ENCODE measurements at regions of chr16 and their contacts with region 1.

Region 1: DNA sequence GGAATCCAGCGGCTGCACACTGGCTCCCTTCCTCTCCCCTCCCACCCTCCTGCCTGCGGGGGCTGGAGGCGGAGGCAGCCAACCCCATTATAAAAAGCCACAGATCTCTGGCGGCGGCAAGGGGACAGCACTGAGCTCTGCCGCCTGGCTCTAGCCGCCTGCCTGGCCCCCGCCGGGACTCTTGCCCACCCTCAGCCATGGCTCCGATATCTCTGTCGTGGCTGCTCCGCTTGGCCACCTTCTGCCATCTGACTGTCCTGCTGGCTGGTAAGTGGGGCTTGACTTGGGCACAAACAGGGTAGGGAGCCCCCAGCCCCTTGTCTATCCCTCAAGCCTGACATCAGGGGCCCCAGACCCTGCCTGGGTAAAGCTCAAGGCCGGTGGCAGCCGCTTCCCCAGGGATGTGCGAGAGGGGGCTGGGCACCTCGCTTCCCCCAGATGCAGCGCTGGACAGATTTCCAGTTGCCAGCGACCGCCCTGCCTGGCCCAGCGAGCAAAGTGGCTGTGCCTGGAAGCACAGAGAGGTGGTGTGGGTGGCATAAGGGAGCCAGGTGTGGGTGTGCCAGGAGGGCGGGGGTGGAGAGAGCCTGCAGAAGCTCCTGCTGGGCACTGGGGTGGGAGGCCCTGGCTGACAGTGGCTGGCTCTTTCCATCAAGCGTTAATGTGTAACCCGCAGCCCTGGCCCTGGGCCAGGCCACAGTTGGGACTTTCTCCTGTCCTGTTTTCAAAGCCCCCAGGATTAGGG is at the start of gene CX3CL1:
- DNase-seq: no peak
- ATAC-seq: peak; percentile 65
- total RNA-seq, gene CX3CL1: 15.2 TPM

Region 2: DNA sequence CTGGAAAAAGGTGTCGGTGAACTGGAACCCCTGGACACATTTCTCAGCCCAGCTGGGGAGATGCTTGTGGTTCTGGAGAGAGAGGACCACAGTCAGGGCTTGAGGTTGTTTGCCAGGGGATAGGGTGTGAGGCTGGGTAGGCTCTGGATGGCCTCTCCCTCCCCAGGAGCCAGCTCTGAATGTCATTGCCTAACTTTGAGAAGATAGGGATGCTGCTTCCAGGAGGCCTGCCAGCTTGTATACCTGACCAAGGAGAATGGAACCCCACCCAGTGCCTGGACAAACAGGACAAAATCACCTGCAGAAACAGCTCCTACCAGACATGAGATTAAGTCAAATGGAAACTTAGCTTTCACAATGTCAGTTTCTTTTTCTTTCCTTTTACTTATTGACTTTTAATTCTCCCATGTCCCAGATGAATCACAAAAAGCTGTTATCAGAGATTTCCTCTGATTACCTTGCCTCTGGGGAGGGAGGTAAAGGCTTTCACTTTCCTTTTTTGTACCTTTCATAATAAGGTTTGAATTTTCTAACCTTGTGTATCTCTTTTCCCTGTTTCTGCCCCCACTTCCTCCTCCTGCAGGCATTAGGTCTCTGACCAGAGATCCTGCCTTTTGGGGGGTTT is 58.3 kb before region 1 on chr16:
- intact Hi-C with region 1: no loop called
- DNase-seq: no peak
- ATAC-seq: no peak

Region 3: DNA sequence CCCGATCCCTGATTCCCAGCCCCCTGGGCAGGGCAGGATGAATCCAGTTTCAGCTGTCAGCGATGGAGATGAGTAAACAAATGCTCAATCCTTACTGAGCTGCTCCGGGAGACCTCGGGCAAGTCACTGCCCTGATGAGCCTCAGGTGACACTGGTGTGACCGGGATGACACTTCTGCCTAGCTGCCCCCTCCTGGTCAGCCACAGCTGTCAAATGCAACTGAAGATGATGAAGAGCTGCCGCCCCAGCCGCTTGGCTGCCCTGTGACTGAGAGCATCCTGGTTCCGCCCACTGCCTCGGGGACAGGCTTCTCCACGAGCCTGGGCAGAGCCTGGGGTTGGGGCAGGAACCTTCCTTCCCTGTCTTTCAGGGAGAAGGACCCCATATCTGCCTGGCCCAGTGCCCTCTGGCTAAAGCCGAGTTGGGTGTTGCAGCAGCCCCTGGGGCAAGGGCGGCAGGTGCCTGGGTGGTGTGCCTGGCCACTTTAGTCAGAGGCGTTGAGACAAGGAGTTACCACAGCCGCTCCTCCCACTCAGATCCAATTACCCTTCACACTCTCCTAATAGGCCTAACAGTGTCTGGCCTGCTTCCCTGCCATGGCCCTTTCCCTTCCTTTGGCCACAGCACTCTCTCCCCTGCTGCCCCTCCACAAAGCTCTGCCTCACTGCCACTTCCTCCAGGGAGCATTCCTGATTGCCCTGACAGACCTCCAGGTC is 37.5 kb after region 1 on chr16:
- intact Hi-C with region 1: loop called (anchors 5 kb)
- DNase-seq: no peak
- ATAC-seq: no peak

Region 4: GRCh38 chr16:57734925-57735754 is 362.6 kb after region 1 on chr16:
- intact Hi-C with region 1: no loop called
- DNase-seq: peak; percentile 99
- ATAC-seq: peak; percentile 98